IMR-90 (cell line): ENCODE measurements at regions of chr6 and their contacts with region 1.

Region 1: GRCh38 chr6:135128268-135128914 is 52.7 kb upstream of the MYB start:
- DNase-seq: no peak
- ATAC-seq: no peak
- H3K4me3 ChIP-seq: no peak overlapping the region
- H3K27ac ChIP-seq: no peak overlapping the region
- H3K4me1 ChIP-seq: no peaks in the 10 kb centered on the region
- H3K27me3 ChIP-seq: peaks cover 30% of the 10 kb centered on the region
- CTCF ChIP-seq: no peak
- POLR2A ChIP-seq: no peak
- RAD21 ChIP-seq: no peak

Region 2: DNA sequence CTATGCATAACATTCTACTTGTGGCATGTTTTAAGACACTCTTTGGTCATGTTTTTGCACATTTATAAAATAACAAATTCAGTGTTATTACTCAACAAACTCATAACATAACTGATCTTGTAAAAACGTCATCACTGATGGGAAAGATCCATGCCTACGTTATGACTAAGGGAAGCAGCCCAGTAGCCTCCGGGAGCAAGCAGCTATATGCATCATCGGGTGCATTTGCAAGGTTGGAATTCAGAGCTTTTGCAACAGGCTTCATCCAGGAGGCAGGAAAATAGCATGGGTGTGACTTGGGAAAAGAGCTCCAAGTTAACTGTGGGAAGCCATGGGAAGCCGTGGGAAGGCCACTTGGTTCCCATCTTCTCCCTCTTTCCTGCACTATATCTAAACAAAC is 538.9 kb before region 1 on chr6:
- CTCF ChIA-PET with region 1: no interaction called
- POLR2A ChIA-PET with region 1: no interaction called
- dilution Hi-C with region 1: no loop called
- in situ Hi-C with region 1: no loop called
- intact Hi-C with region 1: no loop called
- DNase-seq: peak; percentile 100
- ATAC-seq: peak; percentile 98
- H3K4me3 ChIP-seq: no peak overlapping the region
- H3K27ac ChIP-seq: peak overlapping the region; percentile 93
- H3K4me1 ChIP-seq: peaks cover 10% of the 10 kb centered on the region
- H3K27me3 ChIP-seq: no peaks in the 10 kb centered on the region
- CTCF ChIP-seq: no peak
- POLR2A ChIP-seq: no peak; the same call in 1 of the 2 replicates
- RAD21 ChIP-seq: peak; percentile 40

Region 3: GRCh38 chr6:135115834-135116233 is 12.6 kb before region 1 on chr6:
- CTCF ChIA-PET with region 1: no interaction called
- POLR2A ChIA-PET with region 1: interaction called, 12 read pairs
- dilution Hi-C with region 1: no loop called
- in situ Hi-C with region 1: no loop called
- intact Hi-C with region 1: no loop called
- DNase-seq: no peak
- ATAC-seq: no peak
- H3K4me3 ChIP-seq: no peak overlapping the region
- H3K27ac ChIP-seq: no peak overlapping the region
- H3K4me1 ChIP-seq: no peaks in the 10 kb centered on the region
- H3K27me3 ChIP-seq: peaks cover 28% of the 10 kb centered on the region
- CTCF ChIP-seq: no peak
- POLR2A ChIP-seq: no peak
- RAD21 ChIP-seq: no peak